ENCODE measurements at regions of chr11 and their contacts with region 1.

Region 1: GRCh38 chr11:7986768-7987559 is at the start of gene EIF3F:
- DNase-seq: peak; percentile 88 to 92 (median 92)
- ATAC-seq: peak; percentile 99 to 100
- H3K4me3 ChIP-seq: peak within 1 kb of the TSS; percentile 99
- H3K27ac ChIP-seq: peak within 1 kb of the TSS; percentile 68
- H3K4me1 ChIP-seq: no peaks in the 10 kb centered on the region
- H3K27me3 ChIP-seq: no peaks in the 10 kb centered on the region
- total RNA-seq, gene EIF3F: 152 to 175 (median 159) TPM

Region 2: GRCh38 chr11:7892840-7893254 is 94.1 kb before region 1 on chr11:
- intact Hi-C with region 1: loop called (anchors 2 to 5 kb)
- DNase-seq: no peak
- ATAC-seq: peak; percentile 50 to 68
- H3K4me3 ChIP-seq: no peak overlapping the region
- H3K27ac ChIP-seq: no peak overlapping the region
- H3K4me1 ChIP-seq: peaks cover 1% of the 10 kb centered on the region
- H3K27me3 ChIP-seq: no peaks in the 10 kb centered on the region

Region 3: GRCh38 chr11:8263769-8264410 is 276.9 kb after region 1 on chr11 and contains the start of gene LMO1:
- intact Hi-C with region 1: no loop called
- DNase-seq: peak; percentile 84 to 92 (median 90)
- ATAC-seq: peak; percentile 71 to 84
- H3K4me3 ChIP-seq: peak within 1 kb of the TSS; percentile 66
- H3K27ac ChIP-seq: no peak within 1 kb of the TSS
- H3K4me1 ChIP-seq: no peaks in the 10 kb centered on the region
- H3K27me3 ChIP-seq: no peaks in the 10 kb centered on the region
- total RNA-seq, gene LMO1: 0.51 TPM in 1 of 4 donors, not detected in the others

Measured in right cardiac atrium (tissue), 5 donors.